Heart left ventricle (tissue), 16 donors: ENCODE measurements at regions of chr7 and their contacts with region 1.

Region 1: GRCh38 chr7:2757904-2758672 is 70.1 kb downstream of the AMZ1 start:
- DNase-seq: peak in 3 of 5 donors; percentile 44 to 52 (median 48)
- ATAC-seq: peak; percentile 13 to 65 (median 42)
- H3K4me3 ChIP-seq: peak overlapping the region in 4 of 12 donors; percentile 1 to 19 (median 13)
- H3K27ac ChIP-seq: peak overlapping the region; percentile 18 to 98 (median 84)
- H3K4me1 ChIP-seq: peaks cover 16 to 65% (median 54%) of the 10 kb centered on the region in 12 donors
- H3K27me3 ChIP-seq: no peaks in the 10 kb centered on the region
- CTCF ChIP-seq: no peak
- POLR2A ChIP-seq: no peak

Region 2: DNA sequence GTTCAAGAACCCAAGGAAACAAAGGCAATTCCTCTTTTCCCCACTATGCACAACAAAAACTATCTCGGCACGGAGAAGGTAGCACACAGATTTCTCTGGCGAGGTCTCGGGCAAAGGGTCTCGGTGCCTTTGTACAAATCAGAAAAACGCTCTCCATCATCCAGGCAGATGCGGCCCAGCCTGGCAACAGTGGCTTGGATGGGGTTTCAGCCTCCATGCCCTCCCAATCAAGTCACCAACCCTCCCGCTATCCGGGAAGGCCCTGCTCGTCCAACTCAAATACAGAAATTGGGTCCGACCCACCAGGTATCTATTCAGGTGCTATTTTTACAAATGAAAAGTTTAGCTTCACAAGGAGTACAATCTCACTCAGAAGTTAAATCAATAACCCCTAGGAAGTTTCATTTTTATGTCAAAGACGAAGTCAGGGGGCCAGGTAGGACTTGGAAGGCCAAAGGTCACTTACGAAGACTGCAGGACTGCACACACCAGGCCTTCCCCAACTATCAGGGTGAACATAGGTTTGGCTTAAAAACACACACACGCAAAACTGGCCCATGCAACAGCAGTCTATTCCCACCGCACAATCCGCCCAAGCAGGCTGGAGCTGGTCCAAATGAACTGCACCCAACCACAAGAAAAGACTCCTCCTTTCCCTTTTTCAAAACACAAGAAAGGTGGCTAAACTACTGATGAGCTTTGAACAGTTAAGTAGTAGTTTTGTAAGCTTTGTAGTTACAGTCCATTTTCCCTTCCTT is 43.0 kb after region 1 on chr7:
- intact Hi-C with region 1: loop called in 7 of 10 experiments (anchors 5 kb)
- DNase-seq: peak; percentile 63 to 77 (median 68)
- ATAC-seq: peak in 1 of 4 donors; percentile 19
- H3K4me3 ChIP-seq: no peak overlapping the region
- H3K27ac ChIP-seq: peak overlapping the region in 11 of 12 donors; percentile 49 to 84 (median 75)
- H3K4me1 ChIP-seq: peaks cover 3 to 77% (median 60%) of the 10 kb centered on the region in 12 donors
- H3K27me3 ChIP-seq: no peaks in the 10 kb centered on the region
- CTCF ChIP-seq: no peak
- POLR2A ChIP-seq: no peak

Region 3: GRCh38 chr7:2821161-2821841 is 63.2 kb after region 1 on chr7:
- intact Hi-C with region 1: loop called in 1 of 10 experiments (anchors 10 kb)
- DNase-seq: no peak
- ATAC-seq: no peak
- H3K4me3 ChIP-seq: no peak overlapping the region
- H3K27ac ChIP-seq: peak overlapping the region in 7 of 12 donors; percentile 1 to 71 (median 53)
- H3K4me1 ChIP-seq: peaks cover 2 to 88% (median 65%) of the 10 kb centered on the region in 12 donors
- H3K27me3 ChIP-seq: no peaks in the 10 kb centered on the region
- CTCF ChIP-seq: no peak
- POLR2A ChIP-seq: no peak

Region 4: DNA sequence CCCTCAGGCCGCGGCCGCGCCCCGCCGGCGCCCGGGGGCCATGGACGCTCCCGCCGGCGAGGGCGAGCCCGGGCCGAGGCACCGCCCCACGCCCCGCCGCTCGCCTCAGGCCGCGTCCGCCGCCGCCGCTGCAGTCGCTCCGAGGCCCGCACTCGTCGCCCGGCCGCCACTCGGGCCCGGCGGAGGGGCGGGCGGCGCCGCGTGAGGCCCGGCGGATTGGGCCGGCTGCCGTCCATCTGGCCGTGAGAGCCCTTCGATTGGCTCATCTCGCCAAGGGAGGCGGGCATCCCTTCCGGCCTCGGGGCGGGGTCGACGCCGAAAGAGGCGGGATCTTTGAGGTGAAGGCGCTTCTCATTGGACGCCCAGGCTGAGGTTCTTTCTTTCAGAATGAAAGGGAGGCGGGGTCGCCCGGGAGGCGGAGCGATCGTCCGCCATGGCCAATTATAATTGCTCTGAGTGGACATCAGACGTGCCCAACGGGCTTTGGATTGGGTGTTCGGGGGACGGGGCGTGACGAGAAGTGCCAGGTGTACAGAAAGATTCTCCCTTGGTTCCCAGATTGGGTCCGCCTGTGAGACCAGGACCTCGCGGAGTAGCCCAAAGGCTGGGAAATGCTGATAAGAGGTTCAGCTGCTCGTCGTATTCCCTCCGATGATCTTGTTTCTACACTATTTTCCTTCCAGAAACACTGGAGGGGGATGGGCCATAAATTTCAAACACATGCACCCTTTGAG is 86.2 kb after region 1 on chr7 and contains the start of gene GNA12:
- intact Hi-C with region 1: loop called in 5 of 10 experiments (anchors 2 to 5 kb)
- DNase-seq: peak; percentile 98 to 99 (median 98)
- ATAC-seq: peak; percentile 95 to 99 (median 97)
- H3K4me3 ChIP-seq: peak within 1 kb of the TSS; percentile 64 to 94 (median 78)
- H3K27ac ChIP-seq: peak within 1 kb of the TSS in 11 of 12 donors; percentile 22 to 81 (median 68)
- H3K4me1 ChIP-seq: peaks cover 0 to 45% (median 27%) of the 10 kb centered on the region in 12 donors
- H3K27me3 ChIP-seq: no peaks in the 10 kb centered on the region
- CTCF ChIP-seq: no peak
- POLR2A ChIP-seq: peak in 1 of 2 donors; percentile 28
- total RNA-seq, gene GNA12: 30.0 to 56.5 (median 34.9) TPM